Lower lobe of right lung (tissue), 2 donors: ENCODE measurements at regions of chr6 and their contacts with region 1.

Region 1: DNA sequence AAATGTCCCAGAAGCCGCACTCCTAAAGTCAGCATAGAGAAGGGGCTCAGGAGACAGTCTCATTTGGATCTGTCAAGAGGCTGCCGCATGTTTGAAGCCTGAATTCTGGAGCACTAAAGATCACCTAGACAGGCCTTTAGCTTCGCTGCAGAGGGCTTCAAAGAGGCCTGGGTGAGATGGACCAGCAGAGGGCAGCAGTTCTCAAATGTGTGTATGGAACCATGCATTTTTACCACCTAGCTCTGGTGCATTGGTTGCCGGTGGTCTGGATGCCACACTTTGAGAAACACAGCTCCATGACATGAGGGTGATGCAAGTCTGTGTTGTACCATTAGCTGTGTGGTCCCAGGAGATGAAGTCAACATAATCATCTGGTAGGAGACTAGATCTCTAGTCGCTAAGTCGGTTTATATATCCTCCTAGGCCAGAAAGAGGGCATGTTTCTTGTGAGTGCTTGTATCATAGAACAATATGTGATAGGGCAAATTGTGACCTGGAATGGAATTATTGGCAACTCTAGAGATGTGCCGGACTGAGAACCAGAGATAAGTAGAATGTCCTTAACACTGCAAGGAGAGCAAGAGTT is 64.8 kb downstream of the KIAA0319 start:
- DNase-seq: peak; percentile 72
- ATAC-seq: peak; percentile 80 to 87
- H3K4me3 ChIP-seq: no peak overlapping the region
- H3K27ac ChIP-seq: no peak overlapping the region
- H3K4me1 ChIP-seq: peaks cover 11% of the 10 kb centered on the region
- H3K27me3 ChIP-seq: no peaks in the 10 kb centered on the region
- CTCF ChIP-seq: peak; percentile 88

Region 2: DNA sequence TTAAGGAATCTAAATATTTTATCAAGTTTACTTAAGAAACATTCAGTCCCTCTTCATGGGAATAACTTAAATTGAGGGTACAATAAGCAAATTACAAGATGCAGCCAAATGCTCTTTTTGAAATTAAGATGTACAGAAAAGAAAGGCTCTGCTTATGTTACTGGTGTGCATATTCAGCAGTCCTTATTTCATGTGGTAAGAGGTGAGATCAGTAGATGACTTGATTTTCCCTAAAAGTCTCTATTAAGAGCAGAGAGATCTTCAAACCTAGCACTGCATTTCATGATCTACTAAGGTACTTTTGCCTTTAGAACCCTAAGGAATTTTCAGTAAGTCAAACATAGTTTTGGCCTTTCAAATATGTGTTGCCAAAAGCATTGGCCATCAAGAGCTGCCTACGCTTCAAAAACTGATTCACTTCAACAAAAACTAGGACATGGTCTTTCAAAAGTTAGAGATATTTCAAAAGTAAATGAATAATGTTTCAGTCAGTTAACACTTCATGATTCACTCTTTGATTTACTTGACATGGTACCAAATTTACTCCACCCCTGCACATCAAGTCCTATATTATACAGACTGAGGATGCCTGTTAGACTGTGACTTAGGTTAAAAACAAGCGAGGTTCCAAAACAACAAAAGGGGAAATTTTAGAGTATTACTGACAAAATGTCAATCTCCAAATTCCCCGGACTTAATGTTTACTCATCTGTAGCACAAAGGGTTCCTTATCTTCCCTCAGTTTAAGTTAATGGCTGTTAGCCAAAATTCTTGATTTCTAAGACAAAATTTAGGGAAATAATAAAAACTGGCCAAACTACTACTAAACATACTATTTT is 118.6 kb after region 1 on chr6:
- intact Hi-C with region 1: loop called (anchors 5 kb)
- DNase-seq: no peak
- ATAC-seq: no peak
- H3K4me3 ChIP-seq: no peak overlapping the region
- H3K27ac ChIP-seq: no peak overlapping the region
- H3K4me1 ChIP-seq: no peaks in the 10 kb centered on the region
- H3K27me3 ChIP-seq: no peaks in the 10 kb centered on the region
- CTCF ChIP-seq: no peak

Region 3: DNA sequence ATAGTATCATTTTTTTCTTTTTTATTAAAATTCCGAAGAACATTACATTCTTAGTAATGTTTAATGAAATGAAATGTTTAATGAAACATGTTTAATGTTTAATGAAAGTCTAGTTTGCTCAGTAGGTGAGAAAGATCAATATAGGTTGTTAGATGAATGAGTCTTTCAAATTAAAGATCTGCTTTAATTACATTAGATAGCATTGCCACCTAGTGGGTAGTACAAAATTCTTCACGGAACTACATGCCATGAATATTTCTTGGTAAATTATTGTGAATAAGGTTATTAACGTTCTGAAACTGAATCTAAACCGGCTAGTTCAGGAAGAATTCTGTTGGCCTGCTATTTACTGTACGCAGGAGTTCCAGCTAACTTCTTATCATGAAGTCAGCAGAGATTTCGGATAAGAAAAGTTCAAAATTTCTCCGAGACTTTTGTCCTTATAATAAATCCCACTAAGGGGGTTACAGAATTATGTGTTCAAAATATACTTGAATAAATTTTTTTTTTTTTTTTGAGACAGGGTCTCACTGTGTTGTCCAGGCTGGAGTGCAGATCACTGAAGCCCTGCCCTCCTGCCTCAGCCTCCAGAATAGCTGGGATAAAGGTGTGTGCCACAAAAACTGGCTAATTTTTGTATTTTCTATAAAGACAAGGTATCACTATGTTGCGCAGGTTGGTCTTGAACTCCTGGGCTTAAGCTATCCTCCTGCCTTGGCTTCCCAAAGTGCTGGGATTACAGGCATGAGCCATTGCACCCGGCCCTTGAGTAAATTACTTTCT is 185.7 kb after region 1 on chr6:
- intact Hi-C with region 1: loop called (anchors 10 kb)
- DNase-seq: no peak
- ATAC-seq: peak; percentile 60 to 75
- H3K4me3 ChIP-seq: no peak overlapping the region
- H3K27ac ChIP-seq: no peak overlapping the region
- H3K4me1 ChIP-seq: peaks cover 5% of the 10 kb centered on the region
- H3K27me3 ChIP-seq: no peaks in the 10 kb centered on the region
- CTCF ChIP-seq: peak; percentile 46